CD4-positive, alpha-beta T cell (primary cell): ENCODE measurements at regions of chr15 and their contacts with region 1.

Region 1: GRCh38 chr15:65869127-65869953 is at the start of gene RAB11A:
- DNase-seq: peak; percentile 87 to 98 (median 93)
- ATAC-seq: peak; percentile 85
- H3K4me3 ChIP-seq: peak within 1 kb of the TSS; percentile 98
- H3K4me3 Mint-ChIP-seq: peak within 1 kb of the TSS; percentile 99
- H3K27ac ChIP-seq: peak within 1 kb of the TSS; percentile 80 to 96
- H3K27ac Mint-ChIP-seq: peak within 1 kb of the TSS; percentile 100
- H3K4me1 ChIP-seq: peaks cover 21% of the 10 kb centered on the region
- H3K4me1 Mint-ChIP-seq: peaks cover 49% of the 10 kb centered on the region
- H3K27me3 ChIP-seq: no peaks in the 10 kb centered on the region
- H3K27me3 Mint-ChIP-seq: peaks cover 3% of the 10 kb centered on the region
- CTCF ChIP-seq: peak; percentile 48
- total RNA-seq, gene RAB11A: 98.5 to 102 TPM

Region 2: GRCh38 chr15:65318870-65319356 is 550.4 kb before region 1 on chr15:
- CTCF ChIA-PET with region 1: no interaction called
- POLR2A ChIA-PET with region 1: no interaction called
- intact Hi-C with region 1: loop called in 1 of 2 experiments (anchors 10 kb)
- DNase-seq: peak; percentile 56 to 87 (median 69)
- ATAC-seq: peak; percentile 100
- H3K4me3 ChIP-seq: no peak overlapping the region
- H3K4me3 Mint-ChIP-seq: no peak overlapping the region
- H3K27ac ChIP-seq: no peak overlapping the region
- H3K27ac Mint-ChIP-seq: no peak overlapping the region
- H3K4me1 ChIP-seq: peaks cover 2% of the 10 kb centered on the region
- H3K4me1 Mint-ChIP-seq: no peaks in the 10 kb centered on the region
- H3K27me3 ChIP-seq: peaks cover 0 to 8% of the 10 kb centered on the region in 2 experiments
- H3K27me3 Mint-ChIP-seq: peaks cover 4% of the 10 kb centered on the region
- CTCF ChIP-seq: peak; percentile 92

Region 3: GRCh38 chr15:65783872-65784271 is 85.5 kb before region 1 on chr15:
- CTCF ChIA-PET with region 1: interaction called, 3 read pairs
- POLR2A ChIA-PET with region 1: interaction called, 10 read pairs
- intact Hi-C with region 1: no loop called
- DNase-seq: no peak
- ATAC-seq: no peak
- H3K4me3 ChIP-seq: no peak overlapping the region
- H3K4me3 Mint-ChIP-seq: no peak overlapping the region
- H3K27ac ChIP-seq: no peak overlapping the region
- H3K27ac Mint-ChIP-seq: no peak overlapping the region
- H3K4me1 ChIP-seq: peaks cover 30% of the 10 kb centered on the region
- H3K4me1 Mint-ChIP-seq: peaks cover 27% of the 10 kb centered on the region
- H3K27me3 ChIP-seq: no peaks in the 10 kb centered on the region
- H3K27me3 Mint-ChIP-seq: no peaks in the 10 kb centered on the region
- CTCF ChIP-seq: no peak

Region 4: GRCh38 chr15:65832549-65833364 is 36.6 kb before region 1 on chr15:
- CTCF ChIA-PET with region 1: interaction called, 4 read pairs
- POLR2A ChIA-PET with region 1: interaction called, 24 read pairs
- intact Hi-C with region 1: loop called in 1 of 2 experiments (anchors 1 kb)
- DNase-seq: peak in 13 of 14 experiments; percentile 18 to 87 (median 45)
- ATAC-seq: peak; percentile 52
- H3K4me3 ChIP-seq: peak overlapping the region; percentile 2
- H3K4me3 Mint-ChIP-seq: peak overlapping the region; percentile 82
- H3K27ac ChIP-seq: peak overlapping the region; percentile 71 to 80
- H3K27ac Mint-ChIP-seq: peak overlapping the region; percentile 95
- H3K4me1 ChIP-seq: peaks cover 64% of the 10 kb centered on the region
- H3K4me1 Mint-ChIP-seq: peaks cover 59% of the 10 kb centered on the region
- H3K27me3 ChIP-seq: no peaks in the 10 kb centered on the region
- H3K27me3 Mint-ChIP-seq: no peaks in the 10 kb centered on the region
- CTCF ChIP-seq: no peak

Region 5: DNA sequence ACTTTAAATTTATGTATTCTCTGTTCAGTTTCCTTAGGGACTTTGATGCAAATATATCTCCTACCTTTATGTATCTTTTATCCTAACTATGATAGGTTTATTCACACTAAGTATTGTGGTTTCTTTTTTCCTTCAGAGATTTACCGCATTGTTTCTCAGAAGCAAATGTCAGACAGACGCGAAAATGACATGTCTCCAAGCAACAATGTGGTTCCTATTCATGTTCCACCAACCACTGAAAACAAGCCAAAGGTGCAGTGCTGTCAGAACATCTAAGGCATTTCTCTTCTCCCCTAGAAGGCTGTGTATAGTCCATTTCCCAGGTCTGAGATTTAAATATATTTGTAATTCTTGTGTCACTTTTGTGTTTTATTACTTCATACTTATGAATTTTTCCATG is 18.2 kb after region 1 on chr15:
- CTCF ChIA-PET with region 1: interaction called, 3 read pairs
- POLR2A ChIA-PET with region 1: interaction called, 71 read pairs
- intact Hi-C with region 1: loop called in 1 of 2 experiments (anchors 2 kb)
- DNase-seq: peak in 10 of 14 experiments; percentile 6 to 81 (median 34)
- ATAC-seq: peak; percentile 96
- H3K4me3 ChIP-seq: no peak overlapping the region
- H3K4me3 Mint-ChIP-seq: peak overlapping the region; percentile 59
- H3K27ac ChIP-seq: peak overlapping the region in 1 of 2 donors; percentile 42
- H3K27ac Mint-ChIP-seq: peak overlapping the region; percentile 89
- H3K4me1 ChIP-seq: peaks cover 11% of the 10 kb centered on the region
- H3K4me1 Mint-ChIP-seq: peaks cover 75% of the 10 kb centered on the region
- H3K27me3 ChIP-seq: no peaks in the 10 kb centered on the region
- H3K27me3 Mint-ChIP-seq: no peaks in the 10 kb centered on the region
- CTCF ChIP-seq: no peak